Activated CD8-positive, alpha-beta memory T cell treated with anti-CD3 and anti-CD28 coated beads, Interleukin-2, amount 10 ng/mL, durations not matched to agents 7 days and 5 days (primary cell): ENCODE measurements at regions of chr16 and their contacts with region 1.

Region 1: DNA sequence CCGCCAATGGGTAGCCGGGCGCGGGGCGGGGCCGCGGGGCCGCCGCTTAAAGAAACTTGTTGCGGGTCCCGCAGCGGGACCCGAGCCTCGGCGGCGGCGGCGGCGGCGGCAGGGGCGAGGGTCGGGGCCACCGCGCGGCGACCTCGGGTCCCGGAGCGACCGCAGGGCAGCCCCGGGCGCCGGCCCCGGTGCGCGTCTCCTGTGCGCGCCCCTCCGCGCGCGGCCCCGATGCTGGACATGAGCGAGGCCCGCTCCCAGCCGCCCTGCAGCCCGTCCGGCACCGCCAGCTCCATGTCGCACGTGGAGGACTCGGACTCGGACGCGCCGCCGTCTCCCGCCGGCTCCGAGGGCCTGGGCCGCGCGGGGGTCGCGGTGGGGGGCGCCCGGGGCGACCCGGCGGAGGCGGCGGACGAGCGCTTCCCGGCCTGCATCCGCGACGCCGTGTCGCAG is at the start of gene SOX8:
- DNase-seq: no peak
- ATAC-seq: no peak
- H3K4me3 Mint-ChIP-seq: peak within 1 kb of the TSS; percentile 35
- H3K27ac Mint-ChIP-seq: no peak within 1 kb of the TSS
- H3K4me1 Mint-ChIP-seq: peaks cover 3% of the 10 kb centered on the region
- H3K27me3 Mint-ChIP-seq: peaks cover 20% of the 10 kb centered on the region
- total RNA-seq, gene SOX8: 0.12 to 0.16 TPM

Region 2: DNA sequence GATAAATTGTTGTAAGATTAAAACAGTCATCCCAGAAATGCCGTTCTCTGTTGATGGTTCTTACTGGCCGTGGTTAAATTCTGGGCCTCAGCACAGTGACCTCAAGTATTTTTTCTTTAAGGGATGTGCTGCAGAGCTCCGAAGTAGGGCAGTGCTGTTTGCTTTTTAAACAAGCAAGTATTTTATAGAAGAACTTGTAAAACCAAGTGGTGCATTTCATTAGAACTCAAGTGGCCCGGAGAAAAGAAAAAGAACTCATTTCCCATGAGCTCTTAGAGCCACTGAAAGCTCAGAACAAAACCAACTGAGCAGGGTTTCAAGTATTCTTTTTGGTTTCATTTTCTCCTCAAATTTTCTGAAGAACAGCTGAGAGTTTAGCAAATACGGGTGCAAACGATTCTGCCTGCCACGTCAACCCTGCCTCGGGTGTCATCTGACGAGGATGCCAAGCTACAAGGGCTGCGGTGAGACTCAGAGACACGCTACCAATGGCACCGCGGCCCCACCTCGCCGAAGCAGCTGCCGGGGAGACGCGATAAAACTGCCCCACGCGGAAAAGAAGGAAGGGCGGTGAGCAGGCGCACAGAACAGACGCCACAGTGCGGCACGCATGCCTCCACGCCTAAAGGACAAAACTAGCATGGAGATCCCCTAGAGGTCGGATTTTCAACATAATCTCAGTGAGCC is 17.2 kb before region 1 on chr16:
- CTCF ChIA-PET with region 1: interaction called, 10 read pairs
- DNase-seq: peak; percentile 89
- ATAC-seq: peak; percentile 88
- H3K4me3 Mint-ChIP-seq: peak overlapping the region; percentile 78
- H3K27ac Mint-ChIP-seq: peak overlapping the region; percentile 94
- H3K4me1 Mint-ChIP-seq: peaks cover 42% of the 10 kb centered on the region
- H3K27me3 Mint-ChIP-seq: no peaks in the 10 kb centered on the region